Heart left ventricle (tissue), 16 donors: ENCODE measurements at regions of chr12 and their contacts with region 1.

Region 1: DNA sequence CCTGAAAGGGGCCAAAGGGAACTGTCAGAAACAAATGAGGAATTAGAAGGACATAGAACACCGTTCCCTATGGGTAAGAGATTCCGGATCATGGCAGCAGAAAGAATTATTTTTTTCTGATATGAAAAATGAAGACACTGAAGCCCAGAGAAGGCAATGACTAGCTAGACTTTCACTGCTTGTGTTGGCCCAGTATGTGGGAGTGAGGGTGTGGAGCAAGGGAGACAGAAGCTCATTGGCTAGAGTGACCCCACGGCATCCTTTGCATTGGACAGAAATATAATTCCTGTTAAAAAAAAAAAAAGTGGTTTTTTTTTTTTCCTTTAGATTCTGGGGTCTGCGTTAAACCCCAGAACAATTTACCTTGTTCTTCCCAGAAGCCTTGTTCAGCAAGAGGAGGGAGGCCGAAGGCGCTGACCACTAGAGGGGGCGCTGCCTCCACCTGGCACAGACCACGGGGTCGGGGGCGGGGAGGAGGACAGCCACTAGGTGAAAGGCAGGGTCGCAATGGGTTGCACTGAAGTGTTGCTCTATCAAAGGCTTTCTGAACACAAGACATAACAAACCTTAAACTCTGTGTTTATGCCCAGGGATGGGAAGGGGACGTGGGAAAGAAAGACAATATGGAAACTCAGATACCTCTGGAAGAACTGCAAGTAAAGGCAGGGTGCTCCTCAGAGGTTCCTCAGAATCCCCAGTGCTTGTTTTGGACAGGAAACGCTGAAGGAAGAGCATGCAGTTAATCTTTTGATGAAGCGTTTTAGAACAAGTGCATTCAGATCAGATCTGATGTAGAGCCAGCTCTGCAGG is 156.8 kb downstream of the KCNA5 start:
- DNase-seq: peak; percentile 38 to 77 (median 44)
- ATAC-seq: peak in 3 of 4 donors; percentile 71 to 81 (median 76)
- H3K4me3 ChIP-seq: no peak overlapping the region
- H3K27ac ChIP-seq: no peak overlapping the region
- H3K4me1 ChIP-seq: peaks cover 0 to 7% (median 0%) of the 10 kb centered on the region in 12 donors
- H3K27me3 ChIP-seq: peaks cover 0 to 20% (median 0%) of the 10 kb centered on the region in 9 donors
- CTCF ChIP-seq: peak; percentile 51 to 80 (median 71)
- POLR2A ChIP-seq: no peak

Region 2: GRCh38 chr12:5096241-5096935 is 104.1 kb before region 1 on chr12:
- intact Hi-C with region 1: no loop called
- DNase-seq: no peak
- ATAC-seq: peak in 2 of 4 donors; percentile 24 to 49
- H3K4me3 ChIP-seq: no peak overlapping the region
- H3K27ac ChIP-seq: no peak overlapping the region
- H3K4me1 ChIP-seq: peaks cover 0 to 2% (median 0%) of the 10 kb centered on the region in 12 donors
- H3K27me3 ChIP-seq: peaks cover 0 to 21% (median 0%) of the 10 kb centered on the region in 9 donors
- CTCF ChIP-seq: peak in 2 of 12 donors; percentile 9 to 12
- POLR2A ChIP-seq: no peak

Region 3: GRCh38 chr12:5230156-5230555 is 29.7 kb after region 1 on chr12:
- intact Hi-C with region 1: no loop called
- DNase-seq: no peak
- ATAC-seq: no peak
- H3K4me3 ChIP-seq: no peak overlapping the region
- H3K27ac ChIP-seq: no peak overlapping the region
- H3K4me1 ChIP-seq: peaks cover 0 to 9% (median 0%) of the 10 kb centered on the region in 12 donors
- H3K27me3 ChIP-seq: peaks cover 0 to 15% (median 0%) of the 10 kb centered on the region in 9 donors
- CTCF ChIP-seq: no peak
- POLR2A ChIP-seq: no peak

Region 4: GRCh38 chr12:5511644-5512600 is 311.4 kb after region 1 on chr12:
- intact Hi-C with region 1: no loop called
- DNase-seq: peak in 2 of 5 donors; percentile 31 to 35
- ATAC-seq: peak; percentile 20 to 58 (median 36)
- H3K4me3 ChIP-seq: peak overlapping the region in 2 of 12 donors; percentile 8 to 22
- H3K27ac ChIP-seq: no peak overlapping the region
- H3K4me1 ChIP-seq: peaks cover 0 to 23% (median 11%) of the 10 kb centered on the region in 12 donors
- H3K27me3 ChIP-seq: peaks cover 0 to 8% (median 0%) of the 10 kb centered on the region in 9 donors
- CTCF ChIP-seq: peak; percentile 23 to 61 (median 46)
- POLR2A ChIP-seq: no peak

Region 5: GRCh38 chr12:5648692-5649359 is 448.3 kb after region 1 on chr12:
- intact Hi-C with region 1: loop called in 1 of 10 experiments (anchors 10 kb)
- DNase-seq: no peak
- ATAC-seq: peak in 3 of 4 donors; percentile 71 to 75 (median 71)
- H3K4me3 ChIP-seq: no peak overlapping the region
- H3K27ac ChIP-seq: no peak overlapping the region
- H3K4me1 ChIP-seq: peaks cover 0 to 11% (median 0%) of the 10 kb centered on the region in 12 donors
- H3K27me3 ChIP-seq: peaks cover 0 to 14% (median 0%) of the 10 kb centered on the region in 9 donors
- CTCF ChIP-seq: peak; percentile 22 to 69 (median 50)
- POLR2A ChIP-seq: no peak